Activated CD4-positive, alpha-beta T cell treated with anti-CD3 and anti-CD28 coated beads for 36 hours (primary cell): ENCODE measurements at regions of chr14 and their contacts with region 1.

Region 1: GRCh38 chr14:99393047-99393655 is 87.5 kb downstream of the SETD3 start:
- DNase-seq: peak; percentile 69
- ATAC-seq: peak; percentile 54
- H3K4me3 Mint-ChIP-seq: no peak overlapping the region
- H3K27ac Mint-ChIP-seq: no peak overlapping the region
- H3K4me1 Mint-ChIP-seq: peaks cover 11% of the 10 kb centered on the region
- H3K27me3 Mint-ChIP-seq: no peaks in the 10 kb centered on the region

Region 2: GRCh38 chr14:99467338-99468078 is 74.4 kb after region 1 on chr14:
- CTCF ChIA-PET with region 1: no interaction called
- POLR2A ChIA-PET with region 1: no interaction called
- intact Hi-C with region 1: no loop called
- DNase-seq: no peak
- ATAC-seq: no peak
- H3K4me3 Mint-ChIP-seq: no peak overlapping the region
- H3K27ac Mint-ChIP-seq: no peak overlapping the region
- H3K4me1 Mint-ChIP-seq: peaks cover 27% of the 10 kb centered on the region
- H3K27me3 Mint-ChIP-seq: no peaks in the 10 kb centered on the region

Region 3: GRCh38 chr14:99879401-99880295 is 486.5 kb after region 1 on chr14:
- CTCF ChIA-PET with region 1: no interaction called
- POLR2A ChIA-PET with region 1: no interaction called
- intact Hi-C with region 1: loop called in 1 of 2 experiments (anchors 5 kb)
- DNase-seq: no peak
- ATAC-seq: no peak
- H3K4me3 Mint-ChIP-seq: no peak overlapping the region
- H3K27ac Mint-ChIP-seq: no peak overlapping the region
- H3K4me1 Mint-ChIP-seq: no peaks in the 10 kb centered on the region
- H3K27me3 Mint-ChIP-seq: peaks cover 16% of the 10 kb centered on the region